Endothelial cell of umbilical vein (primary cell): ENCODE measurements at regions of chr12 and their contacts with region 1.

Region 1: DNA sequence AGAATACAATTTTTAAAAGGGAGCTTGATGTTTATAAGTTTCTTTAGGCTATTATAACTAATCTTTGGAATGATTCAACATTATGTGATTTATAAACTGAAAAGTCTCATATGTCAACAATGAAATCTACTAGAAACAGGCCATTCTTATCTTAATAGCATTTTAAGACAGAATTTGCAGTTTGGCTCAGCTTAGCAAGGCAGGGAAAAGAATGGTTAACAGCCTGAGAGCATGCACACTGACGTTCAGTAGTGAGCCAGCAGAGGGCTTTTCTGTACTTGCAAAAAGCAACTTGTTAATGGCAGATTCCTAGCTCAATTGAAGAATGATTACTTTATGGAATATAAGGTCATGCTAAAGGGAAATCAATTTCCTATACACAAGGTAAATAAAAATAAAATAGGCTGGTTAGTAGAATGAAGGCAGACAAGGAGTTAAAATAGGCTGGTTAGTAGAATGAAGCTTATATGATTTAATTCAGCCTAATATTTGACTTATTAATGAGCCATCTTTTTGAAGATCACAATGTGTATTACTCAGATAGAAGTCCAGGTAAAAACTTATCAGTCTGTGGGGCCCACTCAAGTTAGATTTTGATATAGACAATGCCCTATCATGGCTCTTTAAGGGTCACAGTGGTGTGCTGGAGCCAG is 95.9 kb downstream of the OTOGL start:
- DNase-seq: peak; percentile 79
- H3K4me3 ChIP-seq: no peak overlapping the region
- H3K27ac ChIP-seq: no peak overlapping the region
- H3K4me1 ChIP-seq: no peaks in the 10 kb centered on the region
- H3K27me3 ChIP-seq: no peaks in the 10 kb centered on the region
- CTCF ChIP-seq: peak; percentile 70 to 74
- POLR2A ChIP-seq: no peak

Region 2: DNA sequence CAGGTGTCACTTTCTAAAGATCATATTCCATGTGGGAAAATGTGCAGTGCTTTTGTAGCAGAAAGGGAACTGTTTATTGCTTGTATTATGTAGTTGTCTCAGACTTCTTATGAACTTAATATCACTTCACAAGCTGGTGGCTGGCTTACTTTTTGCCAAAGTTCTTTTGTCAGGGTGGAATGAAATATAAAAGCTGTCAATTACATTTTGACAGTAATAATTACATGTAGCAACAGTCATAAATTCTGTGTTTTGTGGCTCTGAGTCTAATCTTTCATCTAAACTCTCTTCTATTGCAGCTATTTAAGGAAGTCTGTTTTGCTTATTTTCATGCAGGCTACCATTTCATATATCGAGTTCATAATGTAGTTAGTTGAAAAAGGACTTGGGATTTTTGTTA is 10.8 kb after region 1 on chr12:
- CTCF ChIA-PET with region 1: interaction called, 20 read pairs
- POLR2A ChIA-PET with region 1: no interaction called
- dilution Hi-C with region 1: no loop called
- intact Hi-C with region 1: no loop called
- DNase-seq: no peak
- H3K4me3 ChIP-seq: no peak overlapping the region
- H3K27ac ChIP-seq: no peak overlapping the region
- H3K4me1 ChIP-seq: no peaks in the 10 kb centered on the region
- H3K27me3 ChIP-seq: no peaks in the 10 kb centered on the region
- CTCF ChIP-seq: no peak
- POLR2A ChIP-seq: no peak

Region 3: GRCh38 chr12:80241576-80242273 is 46.5 kb after region 1 on chr12:
- CTCF ChIA-PET with region 1: interaction called, 22 read pairs
- POLR2A ChIA-PET with region 1: no interaction called
- dilution Hi-C with region 1: no loop called
- intact Hi-C with region 1: loop called (anchors 1 kb)
- DNase-seq: peak; percentile 67
- H3K4me3 ChIP-seq: peak overlapping the region in 1 of 3 experiments; percentile 33
- H3K27ac ChIP-seq: peak overlapping the region; percentile 74
- H3K4me1 ChIP-seq: peaks cover 22% of the 10 kb centered on the region
- H3K27me3 ChIP-seq: no peaks in the 10 kb centered on the region
- CTCF ChIP-seq: no peak
- POLR2A ChIP-seq: no peak

Region 4: GRCh38 chr12:80313209-80313608 is 118.0 kb after region 1 on chr12:
- CTCF ChIA-PET with region 1: interaction called, 12 read pairs
- POLR2A ChIA-PET with region 1: no interaction called
- dilution Hi-C with region 1: no loop called
- intact Hi-C with region 1: no loop called
- DNase-seq: peak; percentile 34
- H3K4me3 ChIP-seq: no peak overlapping the region
- H3K27ac ChIP-seq: no peak overlapping the region
- H3K4me1 ChIP-seq: no peaks in the 10 kb centered on the region
- H3K27me3 ChIP-seq: no peaks in the 10 kb centered on the region
- CTCF ChIP-seq: no peak
- POLR2A ChIP-seq: no peak

Region 5: DNA sequence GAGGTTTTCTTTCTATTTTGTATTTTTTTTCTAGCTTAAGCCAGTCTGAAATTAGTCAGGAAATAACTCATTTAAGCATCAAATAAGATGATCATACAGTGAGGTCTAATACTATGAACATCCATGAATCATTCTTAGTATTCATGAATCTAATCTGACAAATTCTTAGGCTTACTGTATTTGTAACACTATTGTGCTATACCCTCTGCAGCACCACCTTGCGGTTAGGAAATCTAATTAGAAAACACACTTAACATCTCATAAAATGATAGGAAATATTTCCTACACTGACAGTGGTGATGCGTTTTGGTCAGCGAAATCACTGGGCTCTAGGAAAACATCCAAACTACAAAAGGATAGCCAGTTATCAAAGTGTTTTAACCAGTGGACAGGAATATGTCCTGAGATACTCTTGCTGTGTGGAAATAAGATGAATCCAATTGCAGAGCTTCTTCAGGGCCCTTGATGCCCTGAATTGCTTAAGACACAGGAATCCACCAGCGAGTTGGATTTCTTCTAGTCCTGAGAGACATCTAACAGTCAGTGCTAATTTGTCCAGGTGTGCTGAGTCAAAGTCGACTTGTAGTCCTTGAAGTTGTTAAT is 402.9 kb after region 1 on chr12:
- CTCF ChIA-PET with region 1: interaction called, 11 read pairs
- POLR2A ChIA-PET with region 1: no interaction called
- dilution Hi-C with region 1: no loop called
- intact Hi-C with region 1: no loop called
- DNase-seq: peak; percentile 55
- H3K4me3 ChIP-seq: no peak overlapping the region
- H3K27ac ChIP-seq: no peak overlapping the region
- H3K4me1 ChIP-seq: no peaks in the 10 kb centered on the region
- H3K27me3 ChIP-seq: no peaks in the 10 kb centered on the region
- CTCF ChIP-seq: peak in 1 of 2 donors; percentile 23
- POLR2A ChIP-seq: no peak

Region 6: GRCh38 chr12:81257947-81258551 is 1062.8 kb after region 1 on chr12:
- CTCF ChIA-PET with region 1: interaction called, 58 read pairs
- POLR2A ChIA-PET with region 1: no interaction called
- dilution Hi-C with region 1: no loop called
- intact Hi-C with region 1: loop called (anchors 5 kb)
- DNase-seq: peak; percentile 66
- H3K4me3 ChIP-seq: no peak overlapping the region
- H3K27ac ChIP-seq: no peak overlapping the region
- H3K4me1 ChIP-seq: peaks cover 2% of the 10 kb centered on the region
- H3K27me3 ChIP-seq: peaks cover 0 to 3% of the 10 kb centered on the region in 2 experiments
- CTCF ChIP-seq: peak; percentile 13 to 40
- POLR2A ChIP-seq: no peak